RWPE1 (cell line): ENCODE measurements at regions of chr1 and their contacts with region 1.

Region 1: GRCh38 chr1:26363549-26364448 is 8.8 kb downstream of the ZNF683 start:
- DNase-seq: no peak
- H3K27ac ChIP-seq: no peak overlapping the region
- CTCF ChIP-seq: peak; percentile 79

Region 2: DNA sequence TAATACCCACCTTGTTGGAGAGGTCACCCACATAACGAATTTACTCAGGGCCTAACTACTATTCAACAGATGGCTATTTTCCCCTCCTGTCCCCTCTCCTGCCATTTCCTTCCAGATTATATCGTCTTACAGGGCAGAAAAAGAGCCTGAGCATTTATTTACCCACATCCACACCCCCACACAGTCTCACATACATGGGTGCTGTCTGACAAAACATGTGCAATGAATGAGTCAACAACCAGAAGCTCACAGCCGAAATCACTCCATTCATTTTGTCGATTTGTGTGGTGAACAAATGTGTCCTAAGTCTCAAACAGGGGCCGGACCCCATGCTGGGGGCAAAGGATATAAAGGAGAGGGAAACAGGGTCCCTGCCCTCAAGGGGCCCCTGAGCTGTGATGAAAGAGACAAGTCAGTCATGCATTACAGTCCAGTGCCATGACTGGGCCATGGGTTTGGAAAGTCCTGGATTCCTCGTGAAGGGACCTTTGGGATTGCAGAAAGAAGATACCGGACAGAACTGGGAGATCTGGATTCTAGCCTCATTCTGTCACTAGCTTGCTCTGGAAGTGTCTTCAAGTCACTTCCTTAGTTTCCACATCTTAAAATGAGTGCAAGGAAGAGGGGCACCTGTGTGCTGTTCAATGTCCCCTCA is 25.1 kb after region 1 on chr1:
- CTCF ChIA-PET with region 1: interaction called, 10 read pairs
- POLR2A ChIA-PET with region 1: no interaction called
- DNase-seq: peak; percentile 27
- H3K27ac ChIP-seq: no peak overlapping the region
- CTCF ChIP-seq: no peak